ENCODE measurements at regions of chr19 and their contacts with region 1.

Region 1: DNA sequence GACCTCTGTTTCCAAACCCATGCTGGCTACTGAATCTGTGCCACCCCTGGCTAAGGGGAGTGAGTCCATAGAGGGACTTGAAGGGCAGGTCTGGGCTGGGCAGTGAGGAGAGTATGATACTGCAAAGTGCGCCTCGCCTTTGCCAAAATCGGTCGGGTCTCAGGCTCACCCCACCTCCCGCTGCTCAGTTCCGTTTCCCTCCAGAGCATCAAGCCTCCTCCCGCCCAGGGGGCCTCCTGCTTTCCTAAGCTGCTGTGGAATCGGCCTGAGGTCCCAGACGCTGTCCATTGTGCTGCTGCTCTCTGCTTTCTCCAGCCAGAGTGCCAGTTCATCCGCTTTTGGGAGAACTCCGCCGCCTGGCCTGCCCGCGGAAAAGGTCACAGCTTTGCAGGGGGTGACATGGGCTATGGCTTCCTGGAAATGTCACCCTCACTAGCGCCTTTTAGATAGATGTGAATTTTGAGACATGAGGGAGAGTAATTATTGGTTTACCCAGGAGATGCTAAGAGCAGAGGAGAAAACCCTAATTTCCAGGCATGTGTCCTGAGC is 1418.4 kb downstream of the UQCRFS1 start:
- DNase-seq: no peak
- H3K4me3 ChIP-seq: peak overlapping the region; percentile 44 to 76 (median 54)
- H3K27ac ChIP-seq: peak overlapping the region; percentile 87 to 92 (median 90)
- H3K4me1 ChIP-seq: peaks cover 9 to 34% (median 17%) of the 10 kb centered on the region in 4 donors
- H3K27me3 ChIP-seq: no peaks in the 10 kb centered on the region
- CTCF ChIP-seq: no peak
- EP300 ChIP-seq: no peak
- POLR2A ChIP-seq: no peak

Region 2: DNA sequence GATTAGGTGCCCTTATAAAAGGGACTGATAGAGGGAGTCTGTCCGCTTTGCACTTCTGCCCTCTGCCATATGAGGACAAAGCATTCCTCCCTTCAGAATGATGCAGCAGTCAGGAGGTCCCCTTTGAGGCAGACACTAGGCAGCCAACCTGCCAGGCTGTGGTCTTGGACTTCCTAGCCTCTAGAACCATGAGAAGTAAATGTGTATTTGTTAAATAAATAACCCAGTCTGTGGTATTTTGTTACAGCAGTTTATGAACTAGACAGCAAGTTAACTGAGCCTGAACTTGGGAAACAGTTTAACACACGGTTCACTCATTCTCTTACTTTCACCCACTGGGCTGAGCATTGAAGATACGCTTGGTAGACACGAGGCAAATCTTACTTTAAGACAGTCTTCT is 1105.1 kb after region 1 on chr19:
- in situ Hi-C with region 1: no loop called
- intact Hi-C with region 1: loop called (anchors 5 kb)
- DNase-seq: no peak
- H3K4me3 ChIP-seq: no peak overlapping the region
- H3K27ac ChIP-seq: no peak overlapping the region
- H3K4me1 ChIP-seq: no peaks in the 10 kb centered on the region
- H3K27me3 ChIP-seq: no peaks in the 10 kb centered on the region
- CTCF ChIP-seq: no peak
- EP300 ChIP-seq: no peak
- POLR2A ChIP-seq: no peak

Measured in transverse colon (tissue), 4 donors.